Activated B cell treated with CpG ODN at 0.5 μM for 24 hours (primary cell): ENCODE measurements at regions of chr1 and their contacts with region 1.

Region 1: GRCh38 chr1:62407405-62408009 is 29.3 kb upstream of the USP1 start:
- DNase-seq: no peak
- ATAC-seq: no peak
- H3K4me3 Mint-ChIP-seq: no peak overlapping the region
- H3K27ac Mint-ChIP-seq: no peak overlapping the region
- H3K4me1 Mint-ChIP-seq: no peaks in the 10 kb centered on the region
- H3K27me3 Mint-ChIP-seq: no peaks in the 10 kb centered on the region
- CTCF ChIP-seq: peak; percentile 64

Region 2: DNA sequence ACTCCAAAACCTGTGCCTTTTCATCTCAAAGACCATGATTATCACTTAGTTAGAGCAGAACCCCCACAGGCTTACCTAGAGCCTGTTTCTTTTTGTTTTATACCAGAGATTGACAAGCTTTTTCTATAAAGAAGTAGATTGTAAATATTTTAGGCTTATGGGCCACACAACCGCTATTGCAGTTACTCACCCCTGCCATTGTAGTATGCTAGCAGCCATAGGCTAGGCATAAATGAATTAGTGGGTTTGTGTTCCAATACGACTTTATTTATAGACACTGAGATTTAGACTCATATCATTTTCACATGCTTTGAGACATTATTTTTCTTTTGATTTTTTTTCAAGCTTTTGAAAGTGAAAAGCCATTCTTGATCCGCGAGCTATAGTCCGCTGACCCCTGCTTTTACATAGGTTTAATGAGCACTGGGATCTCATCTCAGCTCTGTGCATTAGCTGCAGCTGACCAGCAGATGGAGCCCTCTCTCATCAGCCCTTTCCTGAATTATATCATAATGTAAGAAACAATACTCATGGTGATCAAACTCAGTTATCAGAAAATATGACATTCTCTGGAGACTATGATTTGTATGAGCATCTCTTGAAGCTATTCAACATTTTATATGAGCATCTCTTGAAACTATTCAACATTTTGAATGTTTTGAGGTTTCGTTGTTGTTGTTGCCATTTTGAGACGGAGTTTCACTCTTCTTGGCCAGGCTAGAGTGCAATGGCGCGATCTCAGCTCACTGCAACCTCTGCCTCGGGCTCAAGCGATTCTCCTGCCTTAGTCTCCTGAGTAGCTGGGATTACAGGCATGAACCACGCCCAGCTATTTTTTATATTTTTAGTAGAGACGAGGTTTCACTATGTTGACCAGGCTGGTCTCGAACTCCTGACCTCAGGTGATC is 324.8 kb before region 1 on chr1:
- CTCF ChIA-PET with region 1: interaction called, 10 read pairs
- POLR2A ChIA-PET with region 1: no interaction called
- intact Hi-C with region 1: no loop called
- DNase-seq: no peak
- ATAC-seq: no peak
- H3K4me3 Mint-ChIP-seq: no peak overlapping the region
- H3K27ac Mint-ChIP-seq: no peak overlapping the region
- H3K4me1 Mint-ChIP-seq: no peaks in the 10 kb centered on the region
- H3K27me3 Mint-ChIP-seq: no peaks in the 10 kb centered on the region
- CTCF ChIP-seq: peak; percentile 83

Region 3: DNA sequence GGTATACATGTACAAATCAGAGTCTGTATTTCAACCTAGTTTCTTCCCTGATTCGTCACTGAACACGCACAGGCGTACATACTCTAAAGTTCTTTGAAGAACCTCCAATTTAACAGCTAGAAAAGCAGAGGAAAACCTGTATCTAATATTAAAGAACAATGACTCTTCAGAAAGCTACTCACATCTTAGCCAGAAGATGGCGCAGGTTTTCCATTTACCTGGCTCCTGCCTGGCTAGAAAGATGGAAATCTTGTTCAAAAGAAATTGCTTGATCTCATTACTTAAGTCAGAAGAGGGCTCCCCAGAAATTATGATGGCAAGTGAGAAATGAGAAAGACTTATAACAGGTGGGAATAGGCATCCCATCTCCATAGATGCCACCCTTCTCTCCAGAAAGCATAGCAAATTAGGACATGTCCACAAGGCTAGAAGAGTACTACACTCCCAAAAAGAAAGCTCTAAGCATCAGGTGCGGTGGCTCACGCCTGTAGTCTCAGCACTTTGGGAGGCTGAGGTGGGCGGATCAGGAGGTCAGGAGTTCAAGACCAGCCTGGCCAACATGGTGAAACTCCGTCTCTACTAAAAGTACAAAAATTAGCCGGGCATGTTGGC is 231.8 kb before region 1 on chr1:
- CTCF ChIA-PET with region 1: interaction called, 22 read pairs
- POLR2A ChIA-PET with region 1: no interaction called
- intact Hi-C with region 1: no loop called
- DNase-seq: no peak
- ATAC-seq: no peak
- H3K4me3 Mint-ChIP-seq: no peak overlapping the region
- H3K27ac Mint-ChIP-seq: no peak overlapping the region
- H3K4me1 Mint-ChIP-seq: no peaks in the 10 kb centered on the region
- H3K27me3 Mint-ChIP-seq: peaks cover 5% of the 10 kb centered on the region
- CTCF ChIP-seq: no peak

Region 4: GRCh38 chr1:62295921-62296491 is 111.5 kb before region 1 on chr1:
- CTCF ChIA-PET with region 1: no interaction called
- POLR2A ChIA-PET with region 1: no interaction called
- intact Hi-C with region 1: loop called (anchors 2 kb)
- DNase-seq: no peak
- ATAC-seq: no peak
- H3K4me3 Mint-ChIP-seq: no peak overlapping the region
- H3K27ac Mint-ChIP-seq: no peak overlapping the region
- H3K4me1 Mint-ChIP-seq: no peaks in the 10 kb centered on the region
- H3K27me3 Mint-ChIP-seq: peaks cover 18% of the 10 kb centered on the region
- CTCF ChIP-seq: no peak

Region 5: GRCh38 chr1:64403331-64403730 is 1995.8 kb after region 1 on chr1:
- CTCF ChIA-PET with region 1: no interaction called
- POLR2A ChIA-PET with region 1: no interaction called
- intact Hi-C with region 1: no loop called
- DNase-seq: no peak
- ATAC-seq: no peak
- H3K4me3 Mint-ChIP-seq: no peak overlapping the region
- H3K27ac Mint-ChIP-seq: no peak overlapping the region
- H3K4me1 Mint-ChIP-seq: no peaks in the 10 kb centered on the region
- H3K27me3 Mint-ChIP-seq: no peaks in the 10 kb centered on the region
- CTCF ChIP-seq: no peak